H1 (cell line): ENCODE measurements at regions of chr22 and their contacts with region 1.

Region 1: GRCh38 chr22:45645526-45646414 is 25.9 kb upstream of the ATXN10 start:
- DNase-seq: peak in 1 of 2 experiments; percentile 97
- H3K4me3 ChIP-seq: peak overlapping the region in 3 of 4 experiments; percentile 17 to 53 (median 27); a peak in 5 of 8 replicates
- H3K27ac ChIP-seq: no peak overlapping the region
- H3K4me1 ChIP-seq: peaks cover 0 to 9% (median 5%) of the 10 kb centered on the region in 4 experiments; a peak in 5 of 7 replicates
- H3K27me3 ChIP-seq: peaks cover 0 to 22% (median 7%) of the 10 kb centered on the region in 4 experiments; a peak in 5 of 7 replicates
- CTCF ChIP-seq: peak; percentile 89 to 93 (median 89)
- EP300 ChIP-seq: no peak
- POLR2A ChIP-seq: 0 out of 3 replicates have a peak, but pooled peaks of 1 of the 2 experiments have one; percentile 33
- RAD21 ChIP-seq: peak; percentile 90 to 95

Region 2: GRCh38 chr22:45604239-45604711 is 41.5 kb before region 1 on chr22:
- CTCF ChIA-PET with region 1: no interaction called
- POLR2A ChIA-PET with region 1: no interaction called
- DNase-seq: no peak
- H3K4me3 ChIP-seq: no peak overlapping the region
- H3K27ac ChIP-seq: no peak overlapping the region
- H3K4me1 ChIP-seq: peaks cover 0 to 6% (median 2%) of the 10 kb centered on the region in 4 experiments; a peak in 3 of 7 replicates
- H3K27me3 ChIP-seq: no peaks in the 10 kb centered on the region
- CTCF ChIP-seq: no peak
- EP300 ChIP-seq: no peak
- POLR2A ChIP-seq: no peak
- RAD21 ChIP-seq: no peak

Region 3: GRCh38 chr22:45617948-45618347 is 27.8 kb before region 1 on chr22:
- CTCF ChIA-PET with region 1: no interaction called
- POLR2A ChIA-PET with region 1: no interaction called
- DNase-seq: no peak
- H3K4me3 ChIP-seq: no peak overlapping the region
- H3K27ac ChIP-seq: no peak overlapping the region
- H3K4me1 ChIP-seq: peaks cover 1 to 3% (median 3%) of the 10 kb centered on the region in 4 experiments; a peak in 4 of 7 replicates
- H3K27me3 ChIP-seq: no peaks in the 10 kb centered on the region
- CTCF ChIP-seq: no peak
- EP300 ChIP-seq: no peak
- POLR2A ChIP-seq: no peak
- RAD21 ChIP-seq: no peak

Region 4: GRCh38 chr22:45629469-45630089 is 16.2 kb before region 1 on chr22:
- CTCF ChIA-PET with region 1: interaction called, 12 read pairs
- POLR2A ChIA-PET with region 1: interaction called, 3 read pairs
- DNase-seq: no peak
- H3K4me3 ChIP-seq: no peak overlapping the region
- H3K27ac ChIP-seq: no peak overlapping the region
- H3K4me1 ChIP-seq: peaks cover 22 to 31% (median 28%) of the 10 kb centered on the region in 4 experiments
- H3K27me3 ChIP-seq: no peaks in the 10 kb centered on the region; a peak in 3 of 7 replicates
- CTCF ChIP-seq: no peak
- EP300 ChIP-seq: no peak
- POLR2A ChIP-seq: no peak
- RAD21 ChIP-seq: no peak

Region 5: DNA sequence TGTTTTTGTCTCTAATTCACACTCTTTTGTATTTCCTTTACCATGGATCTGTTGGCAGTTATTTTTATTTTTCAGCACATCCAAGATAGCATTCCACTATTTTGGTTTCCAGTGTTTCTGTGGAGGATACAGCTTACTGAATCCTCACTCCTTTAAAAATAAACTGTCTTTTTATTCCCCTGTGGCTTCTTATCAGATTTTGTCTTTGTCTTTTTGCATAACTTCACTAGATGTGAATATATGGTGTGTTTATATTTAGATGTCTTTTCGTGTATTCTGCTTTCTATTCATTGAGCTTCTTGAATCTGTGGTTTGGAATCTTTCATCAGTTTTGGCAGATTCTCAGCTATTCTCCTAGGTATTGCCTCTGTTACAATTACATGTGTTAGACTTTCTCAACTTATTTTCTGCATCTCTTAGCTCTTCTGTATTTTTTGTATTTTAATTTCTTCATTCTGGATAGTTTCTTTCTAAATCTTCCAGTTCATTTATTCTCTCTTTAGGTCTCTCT is 18.4 kb after region 1 on chr22:
- CTCF ChIA-PET with region 1: interaction called, 11 read pairs
- POLR2A ChIA-PET with region 1: no interaction called
- DNase-seq: no peak
- H3K4me3 ChIP-seq: no peak overlapping the region
- H3K27ac ChIP-seq: no peak overlapping the region
- H3K4me1 ChIP-seq: no peaks in the 10 kb centered on the region
- H3K27me3 ChIP-seq: no peaks in the 10 kb centered on the region; a peak in 1 of 7 replicates
- CTCF ChIP-seq: no peak
- EP300 ChIP-seq: no peak
- POLR2A ChIP-seq: no peak
- RAD21 ChIP-seq: no peak

Region 6: DNA sequence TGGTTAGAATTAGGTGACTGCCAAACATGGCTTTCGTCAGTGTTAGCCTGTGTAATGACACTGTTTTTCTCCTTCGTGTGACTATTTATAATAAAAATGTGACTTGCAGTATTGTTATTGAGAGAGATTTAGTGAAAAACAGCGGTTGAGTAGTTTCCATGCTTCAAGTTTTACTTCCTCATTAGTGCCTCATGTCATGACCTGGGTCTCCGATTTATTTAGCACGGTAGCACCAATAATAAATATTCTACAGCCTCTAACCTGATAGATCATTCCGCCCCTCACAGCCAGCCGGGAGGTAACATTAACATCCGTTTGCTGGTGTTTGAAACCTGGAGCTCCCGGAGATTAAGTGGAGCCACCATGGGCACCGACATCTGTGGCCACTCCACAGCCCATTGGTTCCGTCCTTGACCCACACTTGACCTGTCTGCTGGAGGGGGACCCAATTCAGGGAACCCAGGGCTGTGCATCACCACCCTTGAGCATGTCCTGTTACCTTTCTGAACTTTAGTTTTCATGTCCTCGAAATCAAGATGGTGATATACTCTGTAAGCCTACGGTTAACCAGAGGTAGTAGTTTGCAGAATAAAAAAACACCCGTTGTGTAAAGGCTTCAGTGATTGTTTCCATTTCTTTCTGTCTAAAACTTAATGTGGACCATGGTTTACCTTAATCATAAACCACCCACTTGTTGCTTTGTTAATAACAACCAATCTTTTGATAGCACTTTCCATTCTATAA is 130.0 kb after region 1 on chr22:
- CTCF ChIA-PET with region 1: no interaction called
- POLR2A ChIA-PET with region 1: no interaction called
- DNase-seq: no peak
- H3K4me3 ChIP-seq: no peak overlapping the region
- H3K27ac ChIP-seq: no peak overlapping the region
- H3K4me1 ChIP-seq: peaks cover 0 to 8% (median 0%) of the 10 kb centered on the region in 4 experiments; a peak in 4 of 7 replicates
- H3K27me3 ChIP-seq: no peaks in the 10 kb centered on the region
- CTCF ChIP-seq: no peak
- EP300 ChIP-seq: no peak
- POLR2A ChIP-seq: no peak
- RAD21 ChIP-seq: no peak